PC-3 (cell line): ENCODE measurements at regions of chr5 and their contacts with region 1.

Region 1: DNA sequence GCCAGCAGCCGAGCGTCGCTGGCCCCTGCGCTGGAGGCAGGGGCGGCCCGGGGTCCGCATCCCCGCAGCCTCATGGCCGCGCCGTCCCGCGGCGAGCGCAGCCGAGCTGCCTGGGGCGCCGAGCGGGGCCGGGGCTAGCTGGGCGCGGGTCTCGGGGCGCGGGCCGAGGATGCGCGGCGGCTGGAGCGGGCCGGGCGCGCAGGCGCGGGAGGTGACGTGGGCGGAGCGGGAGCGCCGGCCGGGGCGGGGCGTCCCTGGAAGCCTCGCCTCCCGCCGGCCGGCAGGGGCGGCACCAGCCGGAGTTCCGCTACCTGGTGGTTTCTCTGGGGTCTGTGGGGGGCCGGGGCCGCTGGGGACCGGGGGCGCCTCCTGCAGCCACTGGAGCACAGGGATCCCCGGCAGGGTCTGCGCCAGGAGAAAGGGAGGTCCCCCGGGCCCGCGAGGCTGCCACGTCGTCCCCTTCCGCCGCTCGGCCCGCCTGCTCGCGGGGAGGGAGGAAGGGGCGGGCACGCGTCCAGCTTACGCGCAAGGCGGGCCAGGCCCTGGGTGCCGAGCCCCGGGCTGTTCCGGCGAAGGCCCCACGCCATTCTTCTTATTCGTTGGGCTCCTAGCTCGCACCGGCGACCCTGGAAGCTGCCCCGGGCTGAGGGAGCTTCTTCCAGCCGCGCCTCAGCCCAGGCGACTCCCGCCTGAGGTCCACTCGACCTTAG is at the start of gene LPCAT1:
- DNase-seq: peak; percentile 75
- ATAC-seq: peak; percentile 75
- H3K4me3 ChIP-seq: peak within 1 kb of the TSS; percentile 90
- H3K27ac ChIP-seq: peak within 1 kb of the TSS; percentile 86
- H3K4me1 ChIP-seq: peaks cover 27% of the 10 kb centered on the region
- H3K27me3 ChIP-seq: no peaks in the 10 kb centered on the region
- CTCF ChIP-seq: no peak
- total RNA-seq, gene LPCAT1: 121 and 144 TPM in 2 replicates

Region 2: GRCh38 chr5:1344975-1345838 is 178.7 kb before region 1 on chr5 and contains the start of gene CLPTM1L:
- CTCF ChIA-PET with region 1: no interaction called
- POLR2A ChIA-PET with region 1: no interaction called
- intact Hi-C with region 1: no loop called
- DNase-seq: peak; percentile 91
- ATAC-seq: peak; percentile 88
- H3K4me3 ChIP-seq: peak within 1 kb of the TSS; percentile 100
- H3K27ac ChIP-seq: no peak within 1 kb of the TSS; the same call in 1 of the 2 replicates
- H3K4me1 ChIP-seq: peaks cover 11% of the 10 kb centered on the region
- H3K27me3 ChIP-seq: no peaks in the 10 kb centered on the region
- CTCF ChIP-seq: no peak
- total RNA-seq, gene CLPTM1L: 373 and 463 TPM in 2 replicates

Region 3: DNA sequence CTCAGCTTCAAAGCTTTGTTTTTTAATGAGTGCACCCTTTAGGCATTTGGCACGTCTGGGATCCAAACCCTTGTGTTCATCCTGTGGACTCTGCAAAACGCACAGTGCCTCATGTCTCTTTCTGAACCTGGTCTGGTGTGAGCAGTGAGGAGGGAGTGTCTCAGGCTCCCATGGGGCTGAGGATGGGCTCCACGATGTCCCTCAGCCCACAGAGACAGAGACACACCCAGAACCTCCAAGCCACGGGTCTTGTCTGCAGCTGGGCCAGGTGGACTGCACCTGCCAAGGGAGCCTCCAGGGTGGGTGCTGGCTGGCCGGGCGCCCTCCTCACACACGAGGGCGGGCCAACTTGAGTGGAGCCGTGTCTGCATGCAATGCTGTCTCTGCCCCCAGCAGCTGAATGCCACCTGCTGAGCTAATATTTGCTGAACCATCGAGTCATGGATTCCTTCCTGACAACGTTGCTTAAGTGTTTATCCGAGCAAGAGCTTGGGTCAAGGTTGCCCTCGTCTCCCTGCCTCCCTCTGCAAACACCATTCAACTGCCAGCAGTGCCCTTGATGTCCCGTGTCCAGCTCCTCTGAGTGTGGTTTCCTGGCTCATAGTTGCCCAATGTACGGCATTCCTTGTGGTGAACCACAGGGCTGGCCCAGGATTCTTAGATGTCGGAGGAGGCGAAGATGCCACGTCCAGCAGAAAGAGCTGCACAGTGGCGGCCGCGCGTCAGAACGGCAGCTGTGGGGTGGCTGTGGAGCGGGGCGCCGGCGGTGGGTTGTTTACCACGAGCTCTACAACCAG is 31.3 kb after region 1 on chr5:
- CTCF ChIA-PET with region 1: no interaction called
- POLR2A ChIA-PET with region 1: no interaction called
- intact Hi-C with region 1: loop called (anchors 5 kb)
- DNase-seq: peak; percentile 99
- ATAC-seq: peak; percentile 93
- H3K4me3 ChIP-seq: peak overlapping the region; percentile 12; the same call in 1 of the 2 replicates
- H3K27ac ChIP-seq: peak overlapping the region; percentile 78
- H3K4me1 ChIP-seq: peaks cover 38% of the 10 kb centered on the region
- H3K27me3 ChIP-seq: no peaks in the 10 kb centered on the region
- CTCF ChIP-seq: no peak

Region 4: DNA sequence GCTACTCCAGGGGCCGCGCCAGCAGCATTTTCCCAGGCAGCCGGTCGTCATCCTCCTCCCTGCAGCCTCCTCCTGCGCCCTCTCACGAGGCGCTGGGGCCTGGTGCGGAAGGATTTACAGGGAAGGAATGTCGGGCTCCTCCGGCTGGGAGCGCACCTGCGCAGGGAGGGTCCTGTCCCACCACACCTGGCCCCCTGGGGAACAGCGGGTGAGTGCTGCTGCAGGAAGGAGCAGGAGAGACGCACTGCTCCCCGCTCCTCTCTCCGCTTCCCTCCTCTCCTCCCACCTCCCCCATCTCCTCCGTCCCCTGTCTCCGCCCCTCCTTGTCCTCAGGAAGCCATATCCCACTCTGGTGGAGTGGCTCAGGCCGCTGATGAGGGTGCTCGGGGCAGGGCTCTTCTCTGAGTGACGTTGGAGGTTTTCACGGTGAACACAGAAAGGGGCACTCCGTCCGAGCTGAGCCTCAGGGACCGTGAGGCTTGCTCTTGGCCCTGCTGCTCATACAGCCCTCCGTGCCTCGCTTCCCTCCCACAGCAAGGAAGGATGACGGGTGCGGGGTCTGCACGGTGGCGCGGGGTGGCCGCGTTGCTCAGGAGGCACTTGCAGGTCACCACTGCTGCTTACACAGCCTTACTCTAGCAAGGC is 327.5 kb after region 1 on chr5:
- CTCF ChIA-PET with region 1: no interaction called
- POLR2A ChIA-PET with region 1: no interaction called
- intact Hi-C with region 1: no loop called
- DNase-seq: no peak
- ATAC-seq: no peak
- H3K4me3 ChIP-seq: no peak overlapping the region
- H3K27ac ChIP-seq: no peak overlapping the region
- H3K4me1 ChIP-seq: no peaks in the 10 kb centered on the region
- H3K27me3 ChIP-seq: peaks cover 32% of the 10 kb centered on the region; the same call in 1 of the 2 replicates
- CTCF ChIP-seq: no peak